Calu3 (cell line): ENCODE measurements at regions of chr1 and their contacts with region 1.

Region 1: DNA sequence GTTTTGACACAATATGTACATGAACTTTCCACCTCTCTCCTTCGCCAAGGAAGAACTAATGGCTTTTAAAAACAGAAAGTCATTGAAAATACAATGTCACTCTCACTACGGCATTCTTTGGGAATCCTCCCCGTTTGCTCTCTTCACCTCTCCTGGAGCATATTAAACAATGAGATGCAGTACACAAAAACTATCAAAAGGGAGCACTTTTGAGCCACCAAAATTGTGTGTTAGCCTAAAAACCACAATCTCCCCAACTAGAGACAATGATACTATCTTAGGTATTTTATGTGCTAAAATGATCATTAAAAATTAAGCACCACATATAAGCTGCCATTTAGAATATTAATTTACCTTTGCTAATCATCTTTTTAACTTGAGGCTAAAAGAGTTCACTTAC is 425.5 kb downstream of the KCTD3 start:
- DNase-seq: peak; percentile 22
- H3K4me3 Mint-ChIP-seq: no peak overlapping the region
- H3K27ac Mint-ChIP-seq: no peak overlapping the region
- H3K4me1 Mint-ChIP-seq: peaks cover 8% of the 10 kb centered on the region
- H3K27me3 Mint-ChIP-seq: no peaks in the 10 kb centered on the region
- CTCF ChIP-seq: peak; percentile 29

Region 2: GRCh38 chr1:216119602-216120001 is 127.0 kb after region 1 on chr1:
- CTCF ChIA-PET with region 1: interaction called, 4 read pairs
- intact Hi-C with region 1: loop called (anchors 5 kb)
- DNase-seq: peak; percentile 12
- H3K4me3 Mint-ChIP-seq: no peak overlapping the region
- H3K27ac Mint-ChIP-seq: no peak overlapping the region
- H3K4me1 Mint-ChIP-seq: no peaks in the 10 kb centered on the region
- H3K27me3 Mint-ChIP-seq: no peaks in the 10 kb centered on the region
- CTCF ChIP-seq: no peak

Region 3: DNA sequence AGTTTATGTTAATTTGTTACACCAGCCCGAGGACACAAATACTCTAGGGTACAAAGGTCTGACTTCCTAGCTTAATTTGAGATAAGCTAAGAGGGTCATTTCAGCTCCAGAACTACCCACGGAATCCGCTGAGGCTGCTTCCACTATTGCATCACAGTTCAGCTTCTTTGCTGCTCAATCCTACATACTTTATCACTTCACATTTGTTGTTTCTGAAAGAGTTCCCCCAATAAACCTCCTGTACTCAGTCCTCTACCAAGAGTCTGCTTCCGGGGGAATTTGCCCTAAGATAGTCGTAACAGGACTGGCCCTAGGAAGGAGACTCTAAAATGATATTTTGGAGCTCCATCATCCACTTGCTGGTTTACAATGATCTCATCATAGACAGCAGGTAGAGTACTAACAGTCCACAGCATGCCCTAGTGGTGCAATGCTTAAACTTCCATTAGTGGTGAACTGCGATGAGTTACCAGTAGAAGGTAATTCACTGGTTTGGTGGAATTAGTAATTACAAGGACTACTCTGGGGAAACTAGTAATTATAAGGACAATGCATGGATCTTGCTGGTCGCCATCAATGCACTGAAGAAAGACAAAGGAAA is 201.3 kb after region 1 on chr1:
- CTCF ChIA-PET with region 1: interaction called, 4 read pairs
- intact Hi-C with region 1: loop called (anchors 2 kb)
- DNase-seq: peak; percentile 36
- H3K4me3 Mint-ChIP-seq: peak overlapping the region; percentile 1
- H3K27ac Mint-ChIP-seq: no peak overlapping the region
- H3K4me1 Mint-ChIP-seq: peaks cover 14% of the 10 kb centered on the region
- H3K27me3 Mint-ChIP-seq: no peaks in the 10 kb centered on the region
- CTCF ChIP-seq: peak; percentile 22

Region 4: DNA sequence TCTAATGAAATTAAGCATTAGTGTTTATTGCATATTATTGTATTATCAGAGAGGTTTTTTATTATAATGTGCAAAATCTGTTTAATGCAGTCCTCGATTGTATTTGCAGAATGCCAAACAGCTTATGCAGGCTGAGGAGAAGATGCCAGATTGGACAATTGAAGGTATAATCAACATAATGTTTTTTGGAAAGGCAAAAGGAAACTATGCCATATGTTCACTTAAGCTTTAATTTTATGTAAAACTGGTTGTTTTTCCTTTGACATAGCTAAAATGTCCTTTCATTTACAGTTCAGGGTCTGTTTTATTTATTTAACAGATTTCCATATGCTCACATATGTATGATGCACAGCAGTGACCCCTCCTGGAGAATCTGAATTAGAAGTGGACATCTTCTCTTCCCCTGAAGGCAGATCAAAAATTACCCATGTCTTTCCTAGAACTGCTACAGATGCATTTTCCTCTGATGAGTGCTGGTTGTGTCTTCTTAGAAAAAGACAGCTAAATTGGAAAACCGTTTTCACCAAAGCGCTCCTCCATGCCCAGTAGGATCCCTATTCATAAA is 574.1 kb after region 1 on chr1:
- CTCF ChIA-PET with region 1: no interaction called
- intact Hi-C with region 1: loop called (anchors 1 kb)
- DNase-seq: peak; percentile 23
- H3K4me3 Mint-ChIP-seq: no peak overlapping the region
- H3K27ac Mint-ChIP-seq: no peak overlapping the region
- H3K4me1 Mint-ChIP-seq: no peaks in the 10 kb centered on the region
- H3K27me3 Mint-ChIP-seq: peaks cover 22% of the 10 kb centered on the region
- CTCF ChIP-seq: no peak

Region 5: GRCh38 chr1:216723274-216723780 is 730.7 kb after region 1 on chr1 and contains the start of gene ESRRG:
- CTCF ChIA-PET with region 1: no interaction called
- intact Hi-C with region 1: loop called (anchors 5 kb)
- DNase-seq: peak; percentile 75
- H3K4me3 Mint-ChIP-seq: peak within 1 kb of the TSS; percentile 88
- H3K27ac Mint-ChIP-seq: peak within 1 kb of the TSS; percentile 10
- H3K4me1 Mint-ChIP-seq: peaks cover 19% of the 10 kb centered on the region
- H3K27me3 Mint-ChIP-seq: no peaks in the 10 kb centered on the region
- CTCF ChIP-seq: no peak
- total RNA-seq, gene ESRRG: 0.76 and 1.3 TPM in 2 replicates

Region 6: DNA sequence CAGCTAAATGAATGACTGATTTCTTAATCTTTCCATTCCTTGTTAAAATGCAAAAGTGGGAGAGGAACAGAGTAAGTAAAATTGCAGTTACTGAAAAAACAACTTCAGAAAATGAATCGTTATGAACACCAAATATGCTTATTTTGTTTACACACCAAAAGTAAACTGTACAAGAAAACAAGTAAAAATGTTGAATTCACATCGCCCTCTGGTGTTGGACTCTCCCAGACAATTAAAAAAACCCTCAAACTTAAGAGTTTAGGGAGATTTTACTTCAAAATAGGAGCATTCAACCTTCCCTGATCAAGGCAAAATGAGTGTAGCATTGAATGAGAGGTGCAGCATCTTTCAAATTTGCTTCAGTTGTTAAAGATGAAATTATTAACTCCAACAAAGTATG is 750.0 kb after region 1 on chr1:
- CTCF ChIA-PET with region 1: no interaction called
- intact Hi-C with region 1: loop called (anchors 1 kb)
- DNase-seq: peak; percentile 13
- H3K4me3 Mint-ChIP-seq: no peak overlapping the region
- H3K27ac Mint-ChIP-seq: no peak overlapping the region
- H3K4me1 Mint-ChIP-seq: no peaks in the 10 kb centered on the region
- H3K27me3 Mint-ChIP-seq: no peaks in the 10 kb centered on the region
- CTCF ChIP-seq: peak; percentile 37